Posterior vena cava (tissue), 2 donors: ENCODE measurements at regions of chr9 and their contacts with region 1.

Region 1: DNA sequence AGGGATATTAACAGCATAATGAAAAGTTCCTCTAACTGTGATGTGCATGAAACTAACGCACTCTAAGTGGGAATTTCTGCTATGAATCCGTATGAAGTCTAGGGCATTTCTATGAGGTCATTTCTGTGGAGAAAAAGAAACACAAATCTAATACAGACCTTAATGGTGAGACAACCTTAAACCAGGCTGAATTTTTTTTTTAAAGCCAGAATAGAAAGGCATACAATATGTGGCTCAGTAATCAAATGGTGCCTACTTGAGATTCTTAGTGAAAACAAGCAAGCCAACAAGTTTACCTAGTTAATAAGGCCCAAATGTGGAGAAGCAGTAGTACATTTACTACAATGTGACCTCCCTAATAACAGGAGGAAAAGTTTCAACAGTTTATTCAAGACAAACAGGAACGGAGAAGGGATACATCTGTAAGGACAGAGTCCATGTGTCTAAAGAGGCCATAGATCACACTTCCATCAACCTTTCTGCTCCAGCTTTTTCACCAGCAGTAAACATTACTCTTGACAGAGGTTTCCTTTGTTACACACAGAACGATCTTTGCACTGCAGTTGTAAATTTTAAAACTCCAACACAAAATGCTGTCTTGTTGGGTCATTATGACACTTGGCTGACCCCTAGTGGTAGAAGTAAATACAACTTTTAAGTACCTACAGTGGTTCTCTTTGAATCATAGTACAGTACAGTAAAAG is 26.2 kb downstream of the CARNMT1 start:
- DNase-seq: no peak

Region 2: GRCh38 chr9:74653410-74654080 is 348.3 kb before region 1 on chr9:
- intact Hi-C with region 1: no loop called
- DNase-seq: no peak

Region 3: GRCh38 chr9:76725011-76725546 is 1723.2 kb after region 1 on chr9:
- intact Hi-C with region 1: loop called in 1 of 2 experiments (anchors 10 kb)
- DNase-seq: no peak